ENCODE measurements at regions of chr1 and their contacts with region 1.

Region 1: DNA sequence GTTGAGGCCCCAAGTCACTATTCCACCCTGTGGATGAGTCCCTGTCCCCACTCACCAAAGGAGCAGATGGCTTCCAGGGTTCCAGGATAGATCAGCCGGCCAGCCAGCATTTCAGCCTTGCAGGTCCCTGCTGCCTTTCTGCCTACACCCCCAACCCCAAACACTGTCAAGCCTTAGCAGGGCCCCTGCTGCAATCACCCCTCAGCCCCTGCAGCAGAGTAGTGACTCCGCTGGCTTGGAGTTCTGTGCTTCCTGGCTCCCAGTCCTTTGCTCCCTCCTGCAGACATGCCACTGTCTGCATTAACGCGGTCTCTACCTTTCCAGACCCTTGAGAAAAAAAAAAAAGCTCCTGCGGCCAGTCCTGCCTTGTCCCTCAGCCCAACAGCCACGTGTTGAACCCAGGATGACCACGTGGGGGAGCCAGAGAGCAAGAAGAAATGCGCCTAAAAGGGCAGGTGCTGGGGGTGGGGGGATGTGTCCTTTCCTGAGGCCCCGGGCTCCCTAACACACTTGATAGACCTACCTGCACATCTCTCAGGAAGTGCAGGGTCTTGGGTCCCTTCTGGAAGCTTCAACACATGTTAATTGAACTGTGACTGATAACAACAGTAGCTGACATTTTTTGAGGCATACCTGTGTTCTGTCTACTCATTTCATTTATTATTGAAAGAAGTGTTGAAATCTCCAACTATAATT is 37.4 kb downstream of the RASSF5 start:
- DNase-seq: peak; percentile 71 to 93 (median 82)
- ATAC-seq: peak; percentile 95
- H3K4me3 ChIP-seq: no peak overlapping the region
- H3K4me3 Mint-ChIP-seq: no peak overlapping the region
- H3K27ac ChIP-seq: no peak overlapping the region
- H3K27ac Mint-ChIP-seq: no peak overlapping the region
- H3K4me1 ChIP-seq: peaks cover 9% of the 10 kb centered on the region
- H3K4me1 Mint-ChIP-seq: peaks cover 16% of the 10 kb centered on the region
- H3K27me3 ChIP-seq: no peaks in the 10 kb centered on the region
- H3K27me3 Mint-ChIP-seq: no peaks in the 10 kb centered on the region
- CTCF ChIP-seq: peak; percentile 95

Region 2: DNA sequence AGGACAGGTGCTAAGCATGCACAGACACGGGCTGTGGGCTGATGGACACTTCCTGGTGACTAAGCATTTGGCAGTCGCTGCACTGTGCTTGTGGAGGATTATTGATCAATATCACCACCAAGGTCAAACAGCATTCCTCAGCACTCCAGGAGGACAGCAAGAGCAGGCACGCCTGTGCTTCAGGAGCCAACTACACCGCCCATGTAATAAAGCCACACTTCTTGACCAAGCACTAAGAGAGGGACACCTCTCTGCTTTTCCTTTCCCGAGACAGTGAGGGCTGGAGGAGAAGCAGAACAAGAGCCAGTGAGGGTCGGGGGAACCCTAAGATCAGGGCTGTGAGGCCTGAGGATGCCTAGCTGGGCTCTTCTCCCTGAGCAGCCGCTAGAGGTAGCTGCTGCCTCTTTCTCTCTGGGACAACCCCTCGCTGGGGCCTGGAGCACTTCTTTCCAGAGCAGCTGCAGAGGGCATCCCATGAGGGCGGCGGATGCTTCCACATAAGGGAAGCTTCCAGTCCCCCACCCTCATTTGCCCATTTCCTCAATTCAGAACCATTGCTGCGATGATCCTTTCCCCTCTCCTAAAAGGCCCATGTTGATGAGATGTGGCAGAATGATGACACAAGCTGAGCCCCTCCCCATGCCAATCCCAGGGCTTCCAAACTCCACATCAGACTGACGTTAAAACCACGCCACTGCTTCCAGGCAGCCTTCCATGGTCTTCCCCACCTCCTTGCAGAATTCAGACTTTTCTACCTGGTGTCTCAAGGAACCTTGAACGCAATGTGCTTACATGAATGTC is 560.6 kb before region 1 on chr1:
- CTCF ChIA-PET with region 1: no interaction called
- POLR2A ChIA-PET with region 1: no interaction called
- intact Hi-C with region 1: no loop called
- DNase-seq: peak in 1 of 9 experiments; percentile 19
- ATAC-seq: no peak
- H3K4me3 ChIP-seq: no peak overlapping the region
- H3K4me3 Mint-ChIP-seq: no peak overlapping the region
- H3K27ac ChIP-seq: no peak overlapping the region
- H3K27ac Mint-ChIP-seq: no peak overlapping the region
- H3K4me1 ChIP-seq: no peaks in the 10 kb centered on the region
- H3K4me1 Mint-ChIP-seq: no peaks in the 10 kb centered on the region
- H3K27me3 ChIP-seq: no peaks in the 10 kb centered on the region
- H3K27me3 Mint-ChIP-seq: no peaks in the 10 kb centered on the region
- CTCF ChIP-seq: no peak

Region 3: DNA sequence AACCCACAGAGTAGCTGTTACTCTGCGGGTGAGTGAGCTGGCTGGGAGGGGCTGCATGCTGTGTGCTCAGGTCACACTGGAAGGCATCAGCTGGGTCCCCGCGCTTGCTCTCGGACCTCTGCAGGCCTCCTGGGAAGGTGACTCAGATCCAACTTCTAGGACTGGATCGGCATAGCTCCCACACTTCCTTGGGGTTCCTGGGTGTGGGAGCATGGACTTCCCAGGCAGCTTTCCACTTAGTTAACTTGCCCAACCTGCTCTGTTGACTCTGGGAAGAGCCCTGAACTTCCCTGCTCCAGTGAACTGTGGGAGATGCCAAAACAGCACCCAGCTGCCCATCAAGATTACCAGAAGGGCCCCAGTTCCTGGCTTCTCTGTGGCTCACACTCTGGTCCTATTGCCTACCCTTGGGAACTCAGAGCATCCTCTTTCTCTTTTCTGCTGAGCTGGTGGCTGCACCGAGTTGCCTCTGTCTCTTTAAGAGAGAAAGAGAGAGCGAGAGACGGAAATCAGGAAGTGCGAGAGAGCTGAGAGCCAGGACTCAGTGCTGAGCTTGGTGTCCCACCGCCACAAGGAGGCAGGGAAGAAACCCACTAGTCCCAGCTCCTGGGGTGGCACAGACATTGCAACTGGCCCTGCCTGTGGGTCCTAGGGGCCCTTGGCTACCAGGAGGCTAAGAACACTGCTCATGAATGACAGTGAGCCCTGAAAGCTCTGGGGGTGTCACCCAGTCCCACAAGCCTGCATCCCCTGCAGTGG is 74.6 kb before region 1 on chr1 and contains the start of gene IKBKE:
- CTCF ChIA-PET with region 1: interaction called, 34 read pairs
- POLR2A ChIA-PET with region 1: no interaction called
- intact Hi-C with region 1: no loop called
- DNase-seq: peak in 7 of 9 experiments; percentile 29 to 77 (median 54)
- ATAC-seq: peak; percentile 49
- H3K4me3 ChIP-seq: peak within 1 kb of the TSS; percentile 89 to 98
- H3K4me3 Mint-ChIP-seq: peak within 1 kb of the TSS; percentile 91
- H3K27ac ChIP-seq: peak within 1 kb of the TSS; percentile 53 to 71
- H3K27ac Mint-ChIP-seq: peak within 1 kb of the TSS; percentile 91
- H3K4me1 ChIP-seq: peaks cover 67% of the 10 kb centered on the region
- H3K4me1 Mint-ChIP-seq: peaks cover 75% of the 10 kb centered on the region
- H3K27me3 ChIP-seq: no peaks in the 10 kb centered on the region
- H3K27me3 Mint-ChIP-seq: no peaks in the 10 kb centered on the region
- CTCF ChIP-seq: no peak
- total RNA-seq, gene IKBKE: 24.6 to 25.2 TPM

Region 4: DNA sequence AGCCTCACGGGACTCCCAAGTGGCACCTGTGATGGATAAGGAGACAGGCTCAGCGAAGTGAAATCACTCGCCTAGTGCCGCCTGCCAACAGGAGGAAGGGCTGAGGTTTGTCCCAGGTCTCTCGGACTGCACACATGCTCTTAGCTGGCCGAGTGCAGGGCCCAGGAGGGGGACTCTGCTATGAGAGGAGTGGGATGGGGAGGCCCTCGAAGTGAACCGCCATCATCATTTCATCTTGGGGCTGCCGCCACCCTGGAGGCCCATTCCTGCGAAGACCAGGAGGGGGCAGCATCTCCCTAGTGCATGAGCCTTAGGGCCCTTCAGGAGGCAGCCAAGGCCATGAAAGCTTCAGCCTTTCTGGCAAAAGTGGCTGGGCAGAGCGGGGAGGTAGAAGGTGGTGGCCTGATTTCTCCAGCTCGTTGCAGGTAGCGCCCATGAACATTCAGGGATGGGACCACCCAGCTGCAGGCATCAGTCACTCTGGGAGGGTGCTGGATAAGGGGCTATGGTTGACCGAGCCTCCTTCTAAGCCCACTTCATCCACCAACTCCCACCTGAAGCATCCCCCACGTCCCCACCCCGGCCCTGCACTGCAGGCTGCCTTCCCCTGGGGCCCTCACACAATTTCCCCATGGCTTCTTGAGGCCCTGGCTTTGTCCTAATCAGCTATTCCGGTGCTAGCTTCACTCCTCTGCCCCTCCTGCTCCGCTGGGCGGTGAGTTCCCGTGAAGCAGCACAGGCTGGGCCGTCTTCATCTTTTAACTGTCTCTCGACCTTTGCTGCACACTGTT is 54.5 kb before region 1 on chr1:
- CTCF ChIA-PET with region 1: interaction called, 14 read pairs
- POLR2A ChIA-PET with region 1: no interaction called
- intact Hi-C with region 1: loop called in 1 of 2 experiments (anchors 2 kb)
- DNase-seq: peak; percentile 47 to 76 (median 71)
- ATAC-seq: peak; percentile 91
- H3K4me3 ChIP-seq: no peak overlapping the region
- H3K4me3 Mint-ChIP-seq: no peak overlapping the region
- H3K27ac ChIP-seq: no peak overlapping the region
- H3K27ac Mint-ChIP-seq: peak overlapping the region; percentile 18
- H3K4me1 ChIP-seq: no peaks in the 10 kb centered on the region
- H3K4me1 Mint-ChIP-seq: no peaks in the 10 kb centered on the region
- H3K27me3 ChIP-seq: no peaks in the 10 kb centered on the region
- H3K27me3 Mint-ChIP-seq: no peaks in the 10 kb centered on the region
- CTCF ChIP-seq: peak; percentile 67

Region 5: DNA sequence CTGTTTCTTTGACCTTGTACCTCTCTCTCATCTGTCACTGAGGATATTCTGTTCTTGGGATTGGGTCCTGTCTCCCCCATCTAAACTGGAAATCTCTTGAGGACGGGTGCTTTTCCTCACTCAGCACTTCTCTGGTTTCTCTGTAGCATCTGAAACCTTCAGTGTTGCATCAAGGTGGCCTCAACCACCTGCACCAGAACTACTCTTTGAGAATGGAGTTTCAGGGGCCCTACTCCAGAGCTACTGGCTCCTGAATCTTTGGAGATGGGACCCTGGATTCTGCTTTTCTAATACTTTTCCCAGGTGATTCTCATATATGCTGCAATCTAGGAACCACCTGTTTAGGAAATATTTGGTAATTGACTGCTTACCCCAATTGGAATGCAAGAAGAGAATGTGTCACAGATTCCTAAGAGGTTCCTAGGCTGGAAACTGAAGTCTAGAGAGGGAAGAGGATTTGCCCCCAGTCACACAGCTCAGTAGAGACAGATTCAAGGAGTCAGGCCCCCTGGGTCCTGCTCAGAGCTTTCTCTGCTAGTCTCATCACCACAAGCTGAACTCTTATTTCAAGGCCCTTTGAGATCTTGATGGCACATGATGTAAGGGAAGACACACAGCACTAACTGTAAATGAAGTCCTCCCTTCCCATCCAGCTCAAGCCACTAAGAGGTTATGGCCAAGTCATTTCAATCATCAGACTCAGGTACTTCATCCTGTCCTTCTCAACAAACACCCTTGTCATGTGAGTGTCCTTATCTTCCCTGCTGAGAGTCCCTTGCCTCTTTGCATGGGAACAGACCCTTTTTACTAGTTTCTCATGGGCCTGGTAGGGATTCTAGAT is 18.9 kb after region 1 on chr1:
- CTCF ChIA-PET with region 1: interaction called, 709 read pairs
- POLR2A ChIA-PET with region 1: interaction called, 17 read pairs
- intact Hi-C with region 1: loop called in 1 of 2 experiments (anchors 2 kb)
- DNase-seq: no peak
- ATAC-seq: peak; percentile 8
- H3K4me3 ChIP-seq: peak overlapping the region; percentile 0 to 40
- H3K4me3 Mint-ChIP-seq: peak overlapping the region; percentile 83
- H3K27ac ChIP-seq: peak overlapping the region; percentile 17 to 56
- H3K27ac Mint-ChIP-seq: peak overlapping the region; percentile 95
- H3K4me1 ChIP-seq: peaks cover 90% of the 10 kb centered on the region
- H3K4me1 Mint-ChIP-seq: peaks cover 95% of the 10 kb centered on the region
- H3K27me3 ChIP-seq: no peaks in the 10 kb centered on the region
- H3K27me3 Mint-ChIP-seq: no peaks in the 10 kb centered on the region
- CTCF ChIP-seq: no peak

Region 6: DNA sequence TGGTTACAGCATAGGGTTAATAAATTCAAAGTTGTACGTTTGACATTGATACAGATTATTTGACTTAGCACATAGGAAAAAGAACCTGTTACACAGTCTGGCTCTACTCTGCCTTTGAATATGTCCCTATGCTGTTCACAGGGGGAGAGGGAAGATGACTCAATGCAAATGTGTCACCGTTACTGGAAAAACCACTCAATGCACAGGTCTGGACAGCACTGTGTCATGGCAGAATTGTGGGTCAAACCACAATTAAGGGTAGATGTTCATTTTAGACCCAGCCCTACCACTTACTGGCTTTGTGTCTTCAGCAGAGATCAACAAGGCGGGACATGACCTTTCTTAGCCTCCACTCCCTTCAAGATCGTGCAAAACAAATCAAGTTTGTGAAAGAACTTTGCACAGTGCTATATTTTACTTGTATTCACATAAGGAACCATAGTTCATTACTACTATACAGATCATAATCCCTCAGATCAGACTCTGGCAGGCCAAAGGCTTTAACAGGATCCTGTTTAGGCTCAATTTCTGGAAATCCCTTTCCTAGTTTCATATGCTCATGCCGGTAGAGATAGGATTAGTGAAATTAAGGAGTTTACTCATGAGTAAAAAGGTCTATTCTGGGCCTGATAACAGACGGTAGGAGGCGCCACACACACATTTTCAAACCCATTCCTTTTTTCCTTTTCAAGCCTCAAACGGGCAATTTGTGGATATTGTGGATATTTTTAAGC is 45.5 kb after region 1 on chr1:
- CTCF ChIA-PET with region 1: interaction called, 709 read pairs
- POLR2A ChIA-PET with region 1: interaction called, 3 read pairs
- intact Hi-C with region 1: no loop called
- DNase-seq: peak in 6 of 9 experiments; percentile 50 to 78 (median 59)
- ATAC-seq: peak; percentile 87
- H3K4me3 ChIP-seq: no peak overlapping the region
- H3K4me3 Mint-ChIP-seq: peak overlapping the region; percentile 16
- H3K27ac ChIP-seq: peak overlapping the region in 1 of 2 experiments; percentile 44
- H3K27ac Mint-ChIP-seq: peak overlapping the region; percentile 91
- H3K4me1 ChIP-seq: peaks cover 20% of the 10 kb centered on the region
- H3K4me1 Mint-ChIP-seq: peaks cover 46% of the 10 kb centered on the region
- H3K27me3 ChIP-seq: no peaks in the 10 kb centered on the region
- H3K27me3 Mint-ChIP-seq: no peaks in the 10 kb centered on the region
- CTCF ChIP-seq: peak; percentile 50

Measured in CD8-positive, alpha-beta T cell (primary cell).